CD14-positive monocyte (primary cell): ENCODE measurements at regions of chr10 and their contacts with region 1.

Region 1: GRCh38 chr10:10677479-10677878 is 340.2 kb upstream of the CELF2 start:
- DNase-seq: peak; percentile 36 to 60 (median 51)
- H3K4me3 ChIP-seq: no peak overlapping the region
- H3K4me3 Mint-ChIP-seq: no peak overlapping the region
- H3K27ac ChIP-seq: no peak overlapping the region
- H3K27ac Mint-ChIP-seq: no peak overlapping the region
- H3K4me1 ChIP-seq: peaks cover 0 to 2% of the 10 kb centered on the region in 2 donors
- H3K4me1 Mint-ChIP-seq: peaks cover 11% of the 10 kb centered on the region
- H3K27me3 ChIP-seq: no peaks in the 10 kb centered on the region
- H3K27me3 Mint-ChIP-seq: peaks cover 0 to 2% (median 0%) of the 10 kb centered on the region in 3 donors
- CTCF ChIP-seq: peak; percentile 65

Region 2: DNA sequence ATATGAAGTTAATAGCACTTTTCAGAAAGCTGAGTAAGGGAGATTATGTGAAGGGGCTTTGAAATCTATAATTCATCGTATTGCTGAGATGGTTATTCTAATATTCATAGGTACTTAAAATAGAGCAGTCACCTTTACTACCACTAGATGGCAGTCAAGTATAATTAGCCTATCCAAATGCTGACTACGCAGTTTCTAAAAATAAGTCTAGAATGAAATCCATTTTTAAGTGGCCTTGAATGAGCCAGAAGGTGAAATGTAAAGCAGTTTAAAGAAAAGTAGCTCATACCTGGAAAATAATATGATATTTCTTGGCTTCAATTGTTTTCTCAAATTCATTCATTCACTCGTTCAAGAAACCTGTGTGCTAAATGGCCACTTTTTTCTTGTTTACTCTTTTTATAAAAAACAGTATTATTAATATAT is 1345.9 kb before region 1 on chr10:
- intact Hi-C with region 1: loop called in 1 of 2 experiments (anchors 5 kb)
- DNase-seq: peak; percentile 22 to 48 (median 37)
- H3K4me3 ChIP-seq: no peak overlapping the region
- H3K4me3 Mint-ChIP-seq: no peak overlapping the region
- H3K27ac ChIP-seq: no peak overlapping the region
- H3K27ac Mint-ChIP-seq: no peak overlapping the region
- H3K4me1 ChIP-seq: no peaks in the 10 kb centered on the region
- H3K4me1 Mint-ChIP-seq: no peaks in the 10 kb centered on the region
- H3K27me3 ChIP-seq: peaks cover 0 to 4% of the 10 kb centered on the region in 2 donors
- H3K27me3 Mint-ChIP-seq: peaks cover 4 to 10% (median 10%) of the 10 kb centered on the region in 3 donors
- CTCF ChIP-seq: peak; percentile 78

Region 3: DNA sequence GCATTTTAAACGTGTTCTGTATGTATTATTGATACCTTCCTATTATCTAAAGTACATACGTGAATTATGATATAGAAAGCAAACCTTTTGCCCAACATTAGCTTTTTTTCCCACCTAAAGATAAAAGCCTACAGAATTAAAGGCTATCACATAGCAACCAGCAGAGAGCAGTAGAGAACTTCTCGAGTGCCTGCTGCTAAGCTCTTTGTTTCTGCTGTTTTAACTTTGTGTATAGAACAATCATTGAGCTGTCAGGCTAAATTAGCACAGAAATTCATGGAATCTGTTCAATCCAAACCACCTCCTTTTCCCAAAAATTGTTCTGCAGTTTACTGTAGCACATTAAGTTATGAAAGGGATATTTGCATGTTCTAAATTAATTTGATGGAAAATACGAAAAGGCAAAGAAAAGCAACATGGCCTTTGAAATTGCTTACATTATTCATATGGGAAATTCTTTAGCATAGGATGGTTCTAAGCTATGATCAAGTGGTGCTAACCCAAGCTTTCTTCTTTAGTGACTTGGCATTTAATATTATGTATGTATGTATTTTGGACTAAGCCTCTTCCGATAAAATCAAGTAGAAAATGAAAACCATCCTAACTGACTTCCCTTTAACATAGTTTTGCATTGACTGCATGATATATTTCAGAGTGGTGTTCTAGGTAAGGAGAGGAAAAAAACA is 1334.5 kb before region 1 on chr10:
- intact Hi-C with region 1: loop called in 1 of 2 experiments (anchors 5 kb)
- DNase-seq: no peak
- H3K4me3 ChIP-seq: no peak overlapping the region
- H3K4me3 Mint-ChIP-seq: no peak overlapping the region
- H3K27ac ChIP-seq: no peak overlapping the region
- H3K27ac Mint-ChIP-seq: no peak overlapping the region
- H3K4me1 ChIP-seq: no peaks in the 10 kb centered on the region
- H3K4me1 Mint-ChIP-seq: no peaks in the 10 kb centered on the region
- H3K27me3 ChIP-seq: no peaks in the 10 kb centered on the region
- H3K27me3 Mint-ChIP-seq: peaks cover 0 to 2% (median 1%) of the 10 kb centered on the region in 3 donors
- CTCF ChIP-seq: peak; percentile 28

Region 4: GRCh38 chr10:10482613-10483012 is 194.9 kb before region 1 on chr10:
- intact Hi-C with region 1: no loop called
- DNase-seq: no peak
- H3K4me3 ChIP-seq: no peak overlapping the region
- H3K4me3 Mint-ChIP-seq: no peak overlapping the region
- H3K27ac ChIP-seq: no peak overlapping the region
- H3K27ac Mint-ChIP-seq: no peak overlapping the region
- H3K4me1 ChIP-seq: no peaks in the 10 kb centered on the region
- H3K4me1 Mint-ChIP-seq: no peaks in the 10 kb centered on the region
- H3K27me3 ChIP-seq: no peaks in the 10 kb centered on the region
- H3K27me3 Mint-ChIP-seq: peaks cover 2 to 11% (median 10%) of the 10 kb centered on the region in 3 donors
- CTCF ChIP-seq: no peak